ENCODE measurements at regions of chr1 and their contacts with region 1.

Region 1: GRCh38 chr1:59143133-59143487 is 153.8 kb upstream of the FGGY start:
- DNase-seq: no peak
- ATAC-seq: peak in 6 of 8 donors; percentile 18 to 49 (median 33)
- H3K4me3 ChIP-seq: no peak overlapping the region
- H3K27ac ChIP-seq: peak overlapping the region in 8 of 10 donors; percentile 15 to 86 (median 82)
- H3K4me1 ChIP-seq: peaks cover 5 to 74% (median 64%) of the 10 kb centered on the region in 9 donors
- H3K27me3 ChIP-seq: no peaks in the 10 kb centered on the region
- CTCF ChIP-seq: no peak

Region 2: DNA sequence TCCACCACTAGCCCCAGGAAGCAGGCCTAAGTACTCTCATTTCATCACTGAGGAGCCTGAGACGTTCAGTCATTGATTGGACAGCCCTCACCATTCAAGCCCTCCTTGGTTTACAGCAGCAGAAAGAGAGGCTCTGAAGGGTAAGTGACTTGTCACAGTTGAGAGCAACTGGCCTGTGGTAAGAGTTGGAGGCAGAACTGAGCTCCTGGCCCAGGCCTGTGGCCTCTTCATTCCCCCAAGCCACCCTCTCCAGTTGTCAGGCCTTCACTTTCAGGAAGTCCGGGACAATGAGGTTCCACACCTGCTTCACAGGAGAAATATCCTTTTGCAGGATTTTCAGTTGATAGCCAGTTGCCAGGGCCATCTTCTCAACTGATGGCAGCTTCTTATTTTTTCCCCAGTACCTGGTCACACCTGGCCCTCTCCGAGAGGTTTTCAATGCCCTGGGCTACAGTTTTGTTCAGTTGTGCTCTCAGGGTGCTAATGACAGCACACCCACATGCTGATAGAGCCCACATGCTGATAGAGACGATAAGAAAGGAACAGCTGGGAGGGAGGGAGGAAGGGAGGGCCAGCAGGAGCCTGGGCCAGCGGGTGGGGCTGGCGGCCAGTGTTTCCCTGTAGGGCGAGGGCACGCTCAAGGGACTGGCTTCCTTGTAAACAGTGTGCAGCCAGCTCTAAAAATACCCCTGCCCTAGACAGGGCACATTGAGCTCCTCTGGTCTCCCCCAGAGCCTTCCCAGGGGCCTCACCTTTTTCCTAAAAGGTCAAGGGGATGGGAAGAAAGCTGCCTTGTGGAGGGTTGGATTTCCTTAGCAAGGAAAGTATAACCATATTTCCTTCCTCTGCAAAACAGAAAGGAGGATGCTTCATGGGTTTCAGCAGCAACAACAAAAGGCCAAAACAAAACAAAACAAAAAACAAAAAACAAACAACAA is 246.6 kb before region 1 on chr1:
- intact Hi-C with region 1: loop called in 7 of 10 experiments (anchors 5 to 10 kb)
- DNase-seq: peak; percentile 60 to 73
- ATAC-seq: peak; percentile 43 to 91 (median 74)
- H3K4me3 ChIP-seq: no peak overlapping the region
- H3K27ac ChIP-seq: peak overlapping the region; percentile 52 to 93 (median 73)
- H3K4me1 ChIP-seq: peaks cover 35 to 86% (median 74%) of the 10 kb centered on the region in 9 donors
- H3K27me3 ChIP-seq: no peaks in the 10 kb centered on the region
- CTCF ChIP-seq: peak in 1 of 9 donors; percentile 18

Region 3: GRCh38 chr1:59020151-59020997 is 122.7 kb before region 1 on chr1:
- intact Hi-C with region 1: loop called in 1 of 10 experiments (anchors 5 kb)
- DNase-seq: peak; percentile 24 to 63
- ATAC-seq: peak; percentile 46 to 88 (median 76)
- H3K4me3 ChIP-seq: peak overlapping the region in 8 of 10 donors; percentile 4 to 48 (median 35)
- H3K27ac ChIP-seq: peak overlapping the region; percentile 41 to 90 (median 82)
- H3K4me1 ChIP-seq: peaks cover 7 to 50% (median 33%) of the 10 kb centered on the region in 9 donors
- H3K27me3 ChIP-seq: no peaks in the 10 kb centered on the region
- CTCF ChIP-seq: no peak

Region 4: GRCh38 chr1:59057211-59057694 is 85.9 kb before region 1 on chr1:
- intact Hi-C with region 1: loop called in 2 of 10 experiments (anchors 5 kb)
- DNase-seq: peak; percentile 80 to 87
- ATAC-seq: peak; percentile 89 to 93 (median 90)
- H3K4me3 ChIP-seq: no peak overlapping the region
- H3K27ac ChIP-seq: peak overlapping the region in 9 of 10 donors; percentile 6 to 66 (median 60)
- H3K4me1 ChIP-seq: peaks cover 7 to 37% (median 31%) of the 10 kb centered on the region in 9 donors
- H3K27me3 ChIP-seq: no peaks in the 10 kb centered on the region
- CTCF ChIP-seq: peak in 2 of 9 donors; percentile 30 to 32

Region 5: DNA sequence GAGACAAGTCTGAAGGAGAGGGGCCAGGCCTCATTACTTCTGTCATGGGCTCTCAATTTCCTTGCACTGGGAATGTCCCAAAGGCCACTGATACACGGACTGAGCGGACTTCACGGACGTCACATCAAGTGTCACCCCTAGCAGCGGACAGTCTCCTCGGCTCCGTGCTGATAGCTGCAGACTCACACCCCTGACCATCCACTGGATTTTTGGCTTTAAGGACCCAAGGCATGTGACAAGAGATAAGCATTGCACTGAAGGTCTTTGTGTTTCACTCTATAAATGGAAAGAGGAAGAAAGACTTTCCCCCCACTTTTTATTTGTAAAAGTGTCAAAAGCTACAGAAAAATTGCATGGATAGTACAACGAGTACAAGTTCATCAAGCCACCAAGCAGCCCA is 46.6 kb before region 1 on chr1:
- intact Hi-C with region 1: loop called in 2 of 10 experiments (anchors 5 kb)
- DNase-seq: peak; percentile 29 to 52
- ATAC-seq: peak; percentile 75 to 95 (median 90)
- H3K4me3 ChIP-seq: no peak overlapping the region
- H3K27ac ChIP-seq: peak overlapping the region in 7 of 10 donors; percentile 11 to 59 (median 41)
- H3K4me1 ChIP-seq: peaks cover 0 to 27% (median 9%) of the 10 kb centered on the region in 9 donors
- H3K27me3 ChIP-seq: no peaks in the 10 kb centered on the region
- CTCF ChIP-seq: no peak

Region 6: DNA sequence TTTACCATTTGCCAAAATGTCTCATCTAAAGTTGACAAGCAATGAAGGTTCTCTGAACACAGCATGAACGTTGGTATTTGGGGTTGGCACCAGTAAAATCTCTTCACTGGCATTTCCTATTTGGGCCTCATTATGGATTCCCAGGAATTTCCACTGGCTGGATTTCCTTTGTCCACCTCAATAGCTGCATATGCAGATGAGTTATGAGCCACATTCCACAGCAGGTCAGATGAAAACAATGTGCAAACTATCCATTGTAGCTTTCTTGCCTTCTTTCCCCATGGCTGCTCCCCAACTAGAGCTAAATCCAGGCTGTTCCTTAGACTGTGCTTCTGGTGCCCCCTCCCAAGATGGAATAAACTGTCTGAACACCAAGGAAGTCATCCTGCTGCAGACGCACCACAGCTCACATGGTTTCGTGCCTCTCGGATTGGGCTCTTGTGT is 14.3 kb before region 1 on chr1:
- intact Hi-C with region 1: no loop called
- DNase-seq: no peak
- ATAC-seq: no peak
- H3K4me3 ChIP-seq: no peak overlapping the region
- H3K27ac ChIP-seq: no peak overlapping the region
- H3K4me1 ChIP-seq: peaks cover 0 to 15% (median 0%) of the 10 kb centered on the region in 9 donors
- H3K27me3 ChIP-seq: no peaks in the 10 kb centered on the region
- CTCF ChIP-seq: no peak

Region 7: GRCh38 chr1:59316497-59317128 is 173.5 kb after region 1 on chr1:
- intact Hi-C with region 1: no loop called
- DNase-seq: no peak
- ATAC-seq: peak in 6 of 8 donors; percentile 19 to 55 (median 40)
- H3K4me3 ChIP-seq: peak overlapping the region in 6 of 10 donors; percentile 3 to 26 (median 9)
- H3K27ac ChIP-seq: peak overlapping the region in 8 of 10 donors; percentile 15 to 67 (median 41)
- H3K4me1 ChIP-seq: peaks cover 0 to 28% (median 8%) of the 10 kb centered on the region in 9 donors
- H3K27me3 ChIP-seq: no peaks in the 10 kb centered on the region
- CTCF ChIP-seq: no peak